Prostate gland (tissue), 2 donors: ENCODE measurements at regions of chr1 and their contacts with region 1.

Region 1: DNA sequence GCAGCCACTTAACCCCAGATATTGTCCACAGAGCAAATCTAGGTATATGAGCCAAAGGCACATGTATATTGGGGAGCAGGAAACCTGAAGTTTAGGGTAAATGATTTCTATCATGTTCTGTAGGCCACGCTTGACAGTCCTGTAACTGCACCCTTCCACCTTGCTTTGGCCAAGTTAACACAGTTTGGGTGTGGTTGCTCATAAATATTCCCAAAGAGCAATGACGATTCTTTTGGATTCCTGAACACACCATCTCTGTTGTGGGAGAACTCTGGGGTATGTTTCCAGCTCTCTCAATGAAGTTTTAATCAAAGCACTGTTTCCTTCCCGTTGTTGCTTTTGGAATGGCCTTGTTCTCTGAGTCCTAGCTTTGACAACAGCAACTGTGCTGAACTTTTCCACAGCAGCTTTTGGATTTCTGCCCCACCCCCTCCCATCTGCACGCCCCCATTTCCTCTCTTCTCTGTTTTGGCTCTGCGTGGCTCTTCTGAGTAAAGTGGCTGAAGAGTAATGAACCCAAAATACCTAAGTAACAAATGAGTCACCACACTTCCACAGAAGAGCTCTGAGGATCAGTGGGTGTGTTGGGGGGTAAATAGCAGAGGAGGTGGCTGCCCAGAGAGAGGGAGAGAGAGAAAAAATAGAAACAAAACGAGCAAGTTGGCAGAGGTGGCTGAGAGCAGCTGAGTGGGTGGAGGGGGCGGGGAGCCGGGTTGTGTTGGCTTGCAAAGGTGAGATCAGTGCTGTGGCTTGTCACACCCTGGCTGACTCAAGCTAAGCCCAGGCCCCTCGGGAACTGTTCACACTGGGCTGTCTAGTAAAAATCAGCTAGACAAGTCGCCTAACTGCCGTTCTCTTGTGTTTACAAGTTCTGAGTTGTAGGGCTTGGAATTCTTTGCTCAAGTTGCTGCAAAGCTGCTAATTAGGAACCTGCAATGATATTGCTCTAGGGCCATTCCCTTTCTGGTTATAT is 26.9 kb upstream of the RAP1A start:
- DNase-seq: peak; percentile 82
- H3K4me3 ChIP-seq: no peak overlapping the region
- H3K27ac ChIP-seq: peak overlapping the region; percentile 57 to 60
- H3K4me1 ChIP-seq: peaks cover 8% of the 10 kb centered on the region
- H3K27me3 ChIP-seq: no peaks in the 10 kb centered on the region
- CTCF ChIP-seq: no peak
- POLR2A ChIP-seq: no peak

Region 2: DNA sequence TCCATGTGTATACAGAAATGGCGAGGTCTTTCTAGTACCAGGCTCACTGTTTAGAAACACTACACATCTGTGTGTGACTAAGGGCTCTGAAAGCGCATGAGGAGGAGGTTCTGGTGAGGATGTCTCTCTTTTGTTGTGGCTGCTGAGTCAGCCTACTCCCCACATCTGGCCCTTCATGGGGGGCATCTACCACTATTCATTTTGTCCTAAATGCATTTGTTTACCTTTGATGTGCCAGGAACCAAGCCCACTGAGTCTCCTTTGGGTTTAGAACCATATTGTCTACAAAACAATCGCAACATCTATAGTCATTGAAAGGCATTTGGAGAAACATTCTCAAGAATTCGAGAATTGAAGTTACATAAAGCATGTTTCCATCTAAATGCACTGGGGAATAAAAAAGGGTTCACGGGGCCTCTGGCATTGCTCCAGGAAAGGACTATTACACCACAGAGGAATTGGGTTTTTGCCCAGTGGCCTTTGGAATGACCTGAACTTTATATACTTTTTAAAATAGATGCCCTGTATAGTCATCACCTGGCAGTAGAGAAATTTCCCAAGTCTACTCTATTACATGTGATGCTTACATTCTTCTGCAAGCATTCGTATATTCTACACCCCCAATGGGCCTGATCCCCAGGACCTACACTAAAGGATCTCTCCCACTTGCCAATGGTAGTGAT is 54.2 kb before region 1 on chr1:
- intact Hi-C with region 1: loop called (anchors 5 kb)
- DNase-seq: no peak
- H3K4me3 ChIP-seq: no peak overlapping the region
- H3K27ac ChIP-seq: no peak overlapping the region
- H3K4me1 ChIP-seq: no peaks in the 10 kb centered on the region
- H3K27me3 ChIP-seq: no peaks in the 10 kb centered on the region
- CTCF ChIP-seq: no peak
- POLR2A ChIP-seq: no peak

Region 3: DNA sequence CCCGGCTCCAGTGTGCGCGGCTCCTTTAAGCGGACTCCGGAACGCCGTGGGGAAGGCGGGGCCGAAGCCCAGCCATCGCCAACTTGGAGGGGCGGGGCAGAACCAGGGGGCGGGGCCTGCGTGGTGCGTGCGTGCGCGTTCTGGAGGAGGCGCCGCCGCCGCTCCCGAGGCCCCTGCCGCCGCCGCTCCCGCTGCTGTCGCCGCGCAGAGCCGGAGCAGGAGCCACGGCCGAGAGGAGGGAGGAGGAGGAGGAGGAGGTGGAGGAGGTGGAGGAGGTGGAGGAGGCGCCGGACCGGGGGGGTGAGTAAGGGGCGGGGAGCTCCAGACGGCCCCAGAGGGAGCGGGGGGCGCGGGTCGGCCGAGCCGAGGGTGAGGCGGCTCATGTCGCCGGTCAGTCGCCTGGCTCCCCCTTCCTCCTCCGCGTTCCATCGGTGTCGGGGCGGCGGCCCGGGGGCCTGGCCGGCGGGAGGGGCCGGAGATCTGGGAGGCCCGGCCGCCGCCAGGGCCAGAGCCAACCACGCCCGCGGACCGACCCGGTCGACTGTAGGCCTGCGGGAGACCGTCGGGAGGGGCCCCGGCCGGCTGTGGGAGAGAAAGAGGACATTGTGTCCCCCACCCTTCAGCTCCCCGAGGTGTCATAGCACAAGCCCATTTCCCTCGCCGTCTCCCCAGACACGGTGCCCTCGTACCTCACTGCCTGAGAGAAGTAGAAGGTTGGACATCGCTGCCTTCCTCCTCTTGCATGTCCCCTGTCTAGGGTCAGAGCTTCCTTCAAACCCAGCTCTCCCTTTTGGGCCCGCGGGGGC is 27.2 kb after region 1 on chr1 and contains the start of gene RAP1A:
- intact Hi-C with region 1: loop called (anchors 2 kb)
- DNase-seq: peak; percentile 94
- H3K4me3 ChIP-seq: peak within 1 kb of the TSS; percentile 81 to 82
- H3K27ac ChIP-seq: peak within 1 kb of the TSS; percentile 95 to 98
- H3K4me1 ChIP-seq: no peaks in the 10 kb centered on the region
- H3K27me3 ChIP-seq: no peaks in the 10 kb centered on the region
- CTCF ChIP-seq: no peak
- POLR2A ChIP-seq: peak; percentile 59
- total RNA-seq, gene RAP1A: 31.4 to 39.1 TPM